Naive thymus-derived CD4-positive, alpha-beta T cell (primary cell): ENCODE measurements at regions of chr12 and their contacts with region 1.

Region 1: GRCh38 chr12:21451529-21451928 is 14.1 kb downstream of the PYROXD1 start:
- DNase-seq: no peak
- ATAC-seq: no peak
- H3K4me3 ChIP-seq: no peak overlapping the region
- H3K4me3 Mint-ChIP-seq: no peak overlapping the region
- H3K27ac ChIP-seq: no peak overlapping the region
- H3K27ac Mint-ChIP-seq: peak overlapping the region in 4 of 9 donors; percentile 6 to 51 (median 28)
- H3K4me1 ChIP-seq: peaks cover 2 to 21% of the 10 kb centered on the region in 2 donors
- H3K4me1 Mint-ChIP-seq: peaks cover 2 to 48% (median 29%) of the 10 kb centered on the region in 7 donors
- H3K27me3 ChIP-seq: no peaks in the 10 kb centered on the region
- H3K27me3 Mint-ChIP-seq: no peaks in the 10 kb centered on the region

Region 2: DNA sequence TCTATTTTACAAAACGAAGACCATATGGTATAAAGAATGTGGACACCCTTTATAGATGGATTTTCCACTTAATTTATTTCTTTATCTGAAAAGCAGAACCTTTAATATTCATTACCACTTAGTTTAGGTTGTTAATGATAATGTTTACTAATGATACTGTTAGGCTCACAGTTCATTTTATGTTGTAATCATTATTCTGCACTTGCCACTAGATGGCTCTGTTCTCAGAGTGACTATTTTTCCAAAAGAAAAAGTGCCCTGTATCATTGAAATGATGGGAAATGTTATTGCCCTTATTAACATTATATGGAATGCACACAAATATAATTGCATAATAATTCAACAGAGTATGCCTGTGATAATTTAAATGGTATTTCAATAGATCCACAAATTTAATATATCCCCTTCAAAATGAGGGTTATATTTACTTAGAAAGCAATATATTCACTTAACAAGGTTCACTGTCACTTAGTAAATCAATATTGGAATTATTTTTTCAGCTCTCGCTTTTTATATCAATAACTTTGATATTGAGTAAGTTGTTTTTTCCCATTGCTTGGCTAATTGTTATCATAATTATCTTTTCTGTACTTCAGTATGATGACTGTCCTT is 987.5 kb before region 1 on chr12:
- CTCF ChIA-PET with region 1: interaction called, 3 read pairs
- POLR2A ChIA-PET with region 1: no interaction called
- intact Hi-C with region 1: loop called in 1 of 2 experiments (anchors 10 kb)
- DNase-seq: peak in 1 of 9 donors; percentile 8
- ATAC-seq: no peak
- H3K4me3 ChIP-seq: no peak overlapping the region
- H3K4me3 Mint-ChIP-seq: no peak overlapping the region
- H3K27ac ChIP-seq: no peak overlapping the region
- H3K27ac Mint-ChIP-seq: no peak overlapping the region
- H3K4me1 ChIP-seq: no peaks in the 10 kb centered on the region
- H3K4me1 Mint-ChIP-seq: no peaks in the 10 kb centered on the region
- H3K27me3 ChIP-seq: no peaks in the 10 kb centered on the region
- H3K27me3 Mint-ChIP-seq: no peaks in the 10 kb centered on the region

Region 3: GRCh38 chr12:20950248-20950647 is 501.3 kb before region 1 on chr12:
- CTCF ChIA-PET with region 1: no interaction called
- POLR2A ChIA-PET with region 1: no interaction called
- intact Hi-C with region 1: loop called in 1 of 2 experiments (anchors 5 kb)
- DNase-seq: no peak
- ATAC-seq: no peak
- H3K4me3 ChIP-seq: no peak overlapping the region
- H3K4me3 Mint-ChIP-seq: no peak overlapping the region
- H3K27ac ChIP-seq: no peak overlapping the region
- H3K27ac Mint-ChIP-seq: no peak overlapping the region
- H3K4me1 ChIP-seq: no peaks in the 10 kb centered on the region
- H3K4me1 Mint-ChIP-seq: peaks cover 0 to 1% (median 0%) of the 10 kb centered on the region in 7 donors
- H3K27me3 ChIP-seq: no peaks in the 10 kb centered on the region
- H3K27me3 Mint-ChIP-seq: peaks cover 0 to 5% (median 0%) of the 10 kb centered on the region in 5 donors